ENCODE measurements at regions of chr4 and their contacts with region 1.

Region 1: GRCh38 chr4:37603070-37603468 is 83.1 kb downstream of the RELL1 start:
- DNase-seq: peak; percentile 71 to 88
- H3K4me3 ChIP-seq: peak overlapping the region in 1 of 3 donors; percentile 10
- H3K27ac ChIP-seq: no peak overlapping the region
- H3K4me1 ChIP-seq: no peaks in the 10 kb centered on the region
- H3K27me3 ChIP-seq: no peaks in the 10 kb centered on the region
- CTCF ChIP-seq: peak; percentile 93 to 97 (median 96)
- POLR2A ChIP-seq: no peak

Region 2: GRCh38 chr4:37686373-37687193 is 83.5 kb after region 1 on chr4 and contains the start of gene RELL1:
- intact Hi-C with region 1: loop called (anchors 10 kb)
- DNase-seq: peak; percentile 99 to 100
- H3K4me3 ChIP-seq: peak within 1 kb of the TSS; percentile 92 to 97 (median 95)
- H3K27ac ChIP-seq: peak within 1 kb of the TSS; percentile 97 to 98
- H3K4me1 ChIP-seq: no peaks in the 10 kb centered on the region
- H3K27me3 ChIP-seq: no peaks in the 10 kb centered on the region
- CTCF ChIP-seq: peak in 1 of 3 donors; percentile 13
- POLR2A ChIP-seq: no peak
- total RNA-seq, gene RELL1: 68.5 to 88.8 (median 76.0) TPM